HCT116 (cell line): ENCODE measurements at regions of chr18 and their contacts with region 1.

Region 1: DNA sequence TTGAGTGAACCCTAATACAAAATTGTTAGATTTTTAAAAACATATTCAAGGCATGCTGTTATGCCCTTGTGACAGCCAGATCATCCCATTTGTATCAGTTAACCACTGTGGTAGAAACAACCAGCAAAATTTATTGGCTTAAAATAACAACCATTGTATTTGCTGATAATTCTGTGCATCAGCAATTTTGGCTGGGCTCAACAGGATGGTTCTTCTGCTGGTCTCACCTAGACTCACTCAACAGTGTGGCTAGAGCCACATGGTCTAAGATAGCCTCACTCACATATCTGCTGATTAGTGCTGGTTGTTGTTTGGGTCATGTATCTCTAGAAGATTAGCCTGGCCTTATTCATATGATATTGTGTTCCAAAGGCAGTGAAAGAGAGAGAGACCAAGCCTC is 160.1 kb upstream of the GATA6 start:
- DNase-seq: no peak
- ATAC-seq: no peak
- H3K4me3 ChIP-seq: no peak overlapping the region
- H3K27ac ChIP-seq: no peak overlapping the region
- H3K4me1 ChIP-seq: no peaks in the 10 kb centered on the region
- H3K27me3 ChIP-seq: no peaks in the 10 kb centered on the region
- CTCF ChIP-seq: no peak
- POLR2A ChIP-seq: no peak
- RAD21 ChIP-seq: no peak

Region 2: GRCh38 chr18:21997207-21998143 is 11.8 kb before region 1 on chr18:
- CTCF ChIA-PET with region 1: interaction called, 5 read pairs
- POLR2A ChIA-PET with region 1: no interaction called
- RAD21 ChIA-PET with region 1: no interaction called
- intact Hi-C with region 1: loop called (anchors 1 kb)
- DNase-seq: peak; percentile 48
- ATAC-seq: peak; percentile 92
- H3K4me3 ChIP-seq: no peak overlapping the region
- H3K27ac ChIP-seq: no peak overlapping the region
- H3K4me1 ChIP-seq: no peaks in the 10 kb centered on the region
- H3K27me3 ChIP-seq: no peaks in the 10 kb centered on the region
- CTCF ChIP-seq: peak; percentile 36 to 93 (median 82); a peak in 5 of 6 replicates
- POLR2A ChIP-seq: no peak
- RAD21 ChIP-seq: peak; percentile 63

Region 3: GRCh38 chr18:22102953-22103646 is 93.9 kb after region 1 on chr18:
- CTCF ChIA-PET with region 1: no interaction called
- POLR2A ChIA-PET with region 1: no interaction called
- RAD21 ChIA-PET with region 1: no interaction called
- intact Hi-C with region 1: no loop called
- DNase-seq: no peak
- ATAC-seq: no peak
- H3K4me3 ChIP-seq: no peak overlapping the region
- H3K27ac ChIP-seq: no peak overlapping the region
- H3K4me1 ChIP-seq: peaks cover 0 to 8% of the 10 kb centered on the region in 2 experiments; a peak in 1 of 4 replicates
- H3K27me3 ChIP-seq: no peaks in the 10 kb centered on the region
- CTCF ChIP-seq: no peak
- POLR2A ChIP-seq: no peak
- RAD21 ChIP-seq: no peak